ENCODE measurements at regions of chr13 and their contacts with region 1.

Region 1: GRCh38 chr13:21435710-21436151 is 23.4 kb downstream of the ZDHHC20 start:
- DNase-seq: peak; percentile 68
- H3K4me3 Mint-ChIP-seq: peak overlapping the region; percentile 7
- H3K27ac Mint-ChIP-seq: peak overlapping the region; percentile 75
- H3K4me1 Mint-ChIP-seq: peaks cover 41% of the 10 kb centered on the region
- H3K27me3 Mint-ChIP-seq: no peaks in the 10 kb centered on the region

Region 2: DNA sequence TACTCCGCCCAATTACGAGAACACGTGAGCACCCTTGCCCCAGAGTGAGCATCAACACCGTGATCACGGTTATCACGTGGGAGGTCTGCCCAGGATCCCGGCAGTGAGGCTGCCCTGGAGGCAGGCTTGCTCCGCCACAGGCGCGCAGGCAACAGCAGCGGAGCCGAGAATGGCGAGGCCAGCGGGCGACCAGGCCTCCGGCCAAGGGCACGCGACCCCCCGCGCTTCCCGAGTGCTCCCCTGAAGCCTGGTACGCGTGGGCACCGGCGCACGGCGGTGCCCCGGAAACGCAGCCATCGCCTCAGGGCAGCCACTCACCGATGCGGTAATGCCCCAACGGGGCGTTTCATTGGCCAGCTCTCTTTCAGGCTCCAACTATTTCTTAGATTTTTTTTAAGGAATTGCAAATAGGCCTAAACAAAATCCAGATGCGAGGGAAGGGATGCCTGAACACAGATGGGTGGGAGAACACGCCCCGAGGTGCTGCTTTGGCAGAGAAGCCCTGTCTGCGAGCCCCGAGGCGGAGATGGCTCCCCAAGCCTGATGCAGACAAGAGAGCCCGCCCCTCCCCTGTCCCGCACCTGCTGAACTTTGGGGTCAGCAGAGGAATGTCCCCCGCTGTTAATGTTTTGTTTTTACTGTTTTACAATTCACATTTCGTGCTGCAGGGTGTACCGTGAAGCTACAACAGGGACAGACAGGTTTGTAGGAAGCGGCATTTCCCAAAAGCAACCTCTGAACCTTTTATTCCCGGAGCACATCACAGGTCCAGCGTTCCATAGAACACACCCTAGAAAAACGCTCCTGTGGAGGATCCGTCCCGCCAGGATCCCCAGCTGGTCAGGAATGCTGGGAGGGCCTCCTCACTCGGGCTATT is 109.3 kb before region 1 on chr13:
- CTCF ChIA-PET with region 1: no interaction called
- POLR2A ChIA-PET with region 1: no interaction called
- intact Hi-C with region 1: loop called (anchors 5 kb)
- DNase-seq: peak; percentile 40
- H3K4me3 Mint-ChIP-seq: peak overlapping the region; percentile 44
- H3K27ac Mint-ChIP-seq: no peak overlapping the region
- H3K4me1 Mint-ChIP-seq: peaks cover 43% of the 10 kb centered on the region
- H3K27me3 Mint-ChIP-seq: no peaks in the 10 kb centered on the region

Region 3: GRCh38 chr13:21402586-21403228 is 33.0 kb before region 1 on chr13:
- CTCF ChIA-PET with region 1: no interaction called
- POLR2A ChIA-PET with region 1: no interaction called
- intact Hi-C with region 1: loop called (anchors 5 kb)
- DNase-seq: peak; percentile 17
- H3K4me3 Mint-ChIP-seq: no peak overlapping the region
- H3K27ac Mint-ChIP-seq: no peak overlapping the region
- H3K4me1 Mint-ChIP-seq: peaks cover 37% of the 10 kb centered on the region
- H3K27me3 Mint-ChIP-seq: no peaks in the 10 kb centered on the region

Region 4: DNA sequence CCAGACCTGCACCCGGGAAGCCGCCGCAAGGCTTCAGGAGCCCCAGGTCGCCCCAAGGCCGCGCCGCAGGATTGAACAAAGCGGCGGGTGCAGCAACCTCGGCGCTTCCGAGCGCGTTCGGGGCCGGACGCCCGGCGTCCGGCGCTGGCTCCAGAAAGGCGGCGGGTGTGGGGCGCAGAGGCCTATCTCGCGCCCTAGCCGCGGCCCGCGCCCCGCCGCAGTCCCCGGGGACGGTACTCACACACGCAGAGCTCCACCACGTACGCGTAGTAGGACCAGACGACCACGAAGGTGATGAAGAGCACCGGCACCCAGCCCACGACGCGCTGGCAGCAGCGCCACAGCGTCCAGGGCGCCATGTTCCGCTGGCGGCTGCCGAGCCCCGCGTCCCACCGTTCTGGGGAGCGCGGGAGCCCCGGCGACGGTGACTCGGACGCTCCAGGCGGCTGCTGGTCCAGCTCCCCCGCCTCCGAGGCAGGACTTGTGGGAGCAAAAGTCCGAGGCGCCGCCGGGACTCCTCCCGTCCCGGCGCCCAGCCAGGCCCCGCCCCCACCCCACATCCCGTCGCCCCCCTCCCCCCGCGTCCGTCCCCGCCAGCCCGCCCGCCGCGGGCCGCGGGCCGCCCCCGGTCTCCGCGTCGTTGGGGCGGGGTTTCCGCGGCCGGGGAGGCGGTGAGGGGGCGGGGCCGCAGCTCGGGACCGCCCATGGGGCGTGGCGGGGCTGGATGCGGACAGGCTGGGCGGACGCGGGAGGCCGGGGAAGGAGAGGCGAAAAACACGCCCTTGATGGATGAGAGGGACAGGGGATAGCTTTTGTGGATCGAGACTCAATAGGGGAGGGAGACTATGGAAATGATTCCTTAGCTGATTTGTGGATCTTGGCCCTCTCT is 23.3 kb after region 1 on chr13 and contains the start of gene ZDHHC20:
- CTCF ChIA-PET with region 1: no interaction called
- POLR2A ChIA-PET with region 1: interaction called, 3 read pairs
- intact Hi-C with region 1: loop called (anchors 1 kb)
- DNase-seq: peak; percentile 93
- H3K4me3 Mint-ChIP-seq: peak within 1 kb of the TSS; percentile 93
- H3K27ac Mint-ChIP-seq: peak within 1 kb of the TSS; percentile 90
- H3K4me1 Mint-ChIP-seq: peaks cover 29% of the 10 kb centered on the region
- H3K27me3 Mint-ChIP-seq: no peaks in the 10 kb centered on the region
- total RNA-seq, gene ZDHHC20: 53.5 to 60.6 TPM